CD8-positive, alpha-beta memory T cell (primary cell): ENCODE measurements at regions of chr17 and their contacts with region 1.

Region 1: DNA sequence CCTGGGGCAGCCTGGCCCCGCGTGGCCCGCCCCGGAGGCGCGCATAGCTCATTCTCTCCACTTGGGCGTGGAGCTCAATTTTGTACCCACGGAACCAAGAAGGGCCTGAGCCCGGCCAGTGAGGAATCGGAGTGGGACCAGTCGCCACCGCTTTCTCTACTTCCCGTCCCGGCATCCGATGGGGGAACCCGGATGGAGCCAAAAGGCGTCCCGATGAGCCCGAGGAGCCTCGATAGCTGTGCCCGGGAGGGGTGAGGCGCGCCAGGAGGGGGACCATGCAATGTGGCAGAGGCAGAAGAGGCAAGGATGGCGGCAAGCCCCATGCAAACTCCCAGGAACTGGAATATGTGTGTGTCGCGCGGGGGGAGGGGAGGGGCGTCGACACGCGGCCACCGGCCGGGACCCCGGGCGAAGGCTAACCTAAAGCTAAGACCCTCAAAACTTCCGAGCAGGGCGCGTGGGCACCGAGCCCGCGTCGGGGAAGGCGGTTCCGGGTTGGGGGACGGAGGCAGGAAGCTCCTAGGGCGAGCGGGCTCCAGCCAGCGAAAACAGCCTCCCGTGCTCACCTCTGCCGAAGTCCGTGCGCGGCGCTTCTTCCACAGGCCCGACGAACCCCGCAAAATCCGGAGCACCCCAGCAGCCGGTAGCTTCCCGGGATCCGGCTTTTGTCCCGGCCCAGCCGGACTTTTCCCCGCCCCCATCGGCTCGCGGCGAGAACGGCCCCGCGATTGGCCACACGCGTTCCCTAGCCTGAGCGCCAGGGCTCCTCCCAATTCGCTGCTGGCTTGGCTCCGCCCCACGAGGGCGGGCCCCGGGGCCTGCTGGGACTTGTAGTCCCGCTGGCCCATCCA is at the start of gene ACLY:
- DNase-seq: peak; percentile 91 to 96 (median 94)
- H3K4me3 ChIP-seq: peak within 1 kb of the TSS; percentile 90
- H3K4me3 Mint-ChIP-seq: peak within 1 kb of the TSS; percentile 86 to 97 (median 91)
- H3K27ac ChIP-seq: peak within 1 kb of the TSS; percentile 79
- H3K27ac Mint-ChIP-seq: peak within 1 kb of the TSS; percentile 77 to 91 (median 81)
- H3K4me1 ChIP-seq: peaks cover 15% of the 10 kb centered on the region
- H3K4me1 Mint-ChIP-seq: peaks cover 35 to 49% (median 37%) of the 10 kb centered on the region in 3 donors
- H3K27me3 ChIP-seq: no peaks in the 10 kb centered on the region
- H3K27me3 Mint-ChIP-seq: no peaks in the 10 kb centered on the region
- total RNA-seq, gene ACLY: 188 to 189 TPM

Region 2: DNA sequence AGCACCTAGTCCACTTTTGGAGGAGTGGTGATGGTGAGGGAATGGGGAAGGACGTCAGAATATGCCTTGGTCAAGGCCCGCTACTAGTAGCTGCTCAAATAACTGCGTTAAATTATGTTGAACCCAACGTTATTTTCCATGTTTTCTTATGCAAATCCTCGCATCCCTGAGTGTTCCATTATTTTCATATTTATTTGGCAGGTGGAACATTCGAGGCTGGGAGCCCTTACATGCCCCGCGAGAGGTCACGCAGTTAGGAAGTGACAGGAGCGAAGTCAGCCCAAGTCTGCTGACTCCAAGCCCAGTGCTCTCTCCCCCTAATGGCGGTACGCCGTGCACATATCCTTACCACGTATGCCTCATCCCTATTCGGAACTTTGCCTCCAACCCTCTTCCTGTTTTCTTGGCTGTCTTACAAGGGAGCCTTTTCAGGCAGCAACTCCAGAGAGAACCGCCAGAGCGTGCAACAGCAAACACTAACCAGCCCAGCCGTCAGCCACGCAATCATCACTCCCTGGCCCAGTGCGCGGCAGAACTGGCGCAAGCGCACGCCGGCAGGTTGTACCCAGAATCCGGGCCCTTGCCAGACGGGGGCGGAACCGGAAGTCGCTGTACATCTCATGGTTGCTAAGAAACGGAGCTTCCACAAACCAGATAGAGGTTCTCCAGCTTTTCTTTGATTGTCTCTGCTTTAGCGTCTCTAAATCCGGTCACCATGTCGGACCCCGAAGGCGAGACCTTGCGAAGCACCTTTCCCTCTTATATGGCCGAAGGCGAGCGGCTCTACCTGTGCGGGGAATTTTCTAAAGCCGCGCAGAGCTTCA is 11.7 kb after region 1 on chr17 and contains the start of gene ODAD4:
- CTCF ChIA-PET with region 1: interaction called, 8 read pairs
- POLR2A ChIA-PET with region 1: interaction called, 15 read pairs
- DNase-seq: peak; percentile 94 to 97 (median 96)
- H3K4me3 ChIP-seq: peak within 1 kb of the TSS; percentile 72
- H3K4me3 Mint-ChIP-seq: peak within 1 kb of the TSS; percentile 88 to 97 (median 94)
- H3K27ac ChIP-seq: peak within 1 kb of the TSS; percentile 90
- H3K27ac Mint-ChIP-seq: peak within 1 kb of the TSS; percentile 90 to 100 (median 97)
- H3K4me1 ChIP-seq: peaks cover 20% of the 10 kb centered on the region
- H3K4me1 Mint-ChIP-seq: peaks cover 19 to 26% (median 24%) of the 10 kb centered on the region in 3 donors
- H3K27me3 ChIP-seq: no peaks in the 10 kb centered on the region
- H3K27me3 Mint-ChIP-seq: peaks cover 4 to 9% of the 10 kb centered on the region in 2 donors
- total RNA-seq, gene ODAD4: 0.53 to 0.57 TPM

Region 3: GRCh38 chr17:42329025-42329976 is 410.8 kb after region 1 on chr17:
- CTCF ChIA-PET with region 1: no interaction called
- POLR2A ChIA-PET with region 1: interaction called, 10 read pairs
- DNase-seq: no peak
- H3K4me3 ChIP-seq: no peak overlapping the region
- H3K4me3 Mint-ChIP-seq: no peak overlapping the region
- H3K27ac ChIP-seq: no peak overlapping the region
- H3K27ac Mint-ChIP-seq: peak overlapping the region in 2 of 8 donors; percentile 33 to 44
- H3K4me1 ChIP-seq: no peaks in the 10 kb centered on the region
- H3K4me1 Mint-ChIP-seq: no peaks in the 10 kb centered on the region
- H3K27me3 ChIP-seq: no peaks in the 10 kb centered on the region
- H3K27me3 Mint-ChIP-seq: no peaks in the 10 kb centered on the region

Region 4: DNA sequence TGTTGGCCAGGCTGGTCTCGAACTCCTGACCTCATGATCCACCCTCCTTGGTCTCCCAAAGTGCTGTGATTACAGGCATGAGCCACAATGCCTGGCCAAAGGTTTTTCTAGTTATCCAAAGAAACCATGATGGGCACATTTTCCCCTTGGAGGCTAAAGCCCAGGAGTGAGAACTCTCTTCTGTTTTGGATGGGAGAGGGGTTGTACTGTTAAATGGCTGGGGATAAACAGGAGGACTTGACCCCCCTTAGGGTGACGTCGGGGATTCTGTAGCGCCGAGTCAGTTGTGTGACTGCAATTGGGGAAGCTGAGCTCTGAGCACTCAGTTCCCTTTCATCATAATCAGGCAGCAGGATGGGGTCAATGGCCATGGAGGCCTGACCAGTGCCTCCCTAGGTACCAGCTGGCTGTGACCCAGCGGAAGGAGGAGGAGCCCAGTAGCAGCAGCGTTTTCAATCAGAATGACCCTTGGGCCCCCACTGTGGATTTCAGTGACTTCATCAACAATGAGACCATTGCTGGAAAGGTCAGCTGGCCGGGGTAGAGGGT is 936.6 kb after region 1 on chr17:
- CTCF ChIA-PET with region 1: no interaction called
- POLR2A ChIA-PET with region 1: no interaction called
- DNase-seq: no peak
- H3K4me3 ChIP-seq: no peak overlapping the region
- H3K4me3 Mint-ChIP-seq: no peak overlapping the region
- H3K27ac ChIP-seq: no peak overlapping the region
- H3K27ac Mint-ChIP-seq: no peak overlapping the region
- H3K4me1 ChIP-seq: no peaks in the 10 kb centered on the region
- H3K4me1 Mint-ChIP-seq: no peaks in the 10 kb centered on the region
- H3K27me3 ChIP-seq: no peaks in the 10 kb centered on the region
- H3K27me3 Mint-ChIP-seq: peaks cover 9 to 19% of the 10 kb centered on the region in 2 donors